ENCODE measurements at regions of chr6 and their contacts with region 1.

Region 1: DNA sequence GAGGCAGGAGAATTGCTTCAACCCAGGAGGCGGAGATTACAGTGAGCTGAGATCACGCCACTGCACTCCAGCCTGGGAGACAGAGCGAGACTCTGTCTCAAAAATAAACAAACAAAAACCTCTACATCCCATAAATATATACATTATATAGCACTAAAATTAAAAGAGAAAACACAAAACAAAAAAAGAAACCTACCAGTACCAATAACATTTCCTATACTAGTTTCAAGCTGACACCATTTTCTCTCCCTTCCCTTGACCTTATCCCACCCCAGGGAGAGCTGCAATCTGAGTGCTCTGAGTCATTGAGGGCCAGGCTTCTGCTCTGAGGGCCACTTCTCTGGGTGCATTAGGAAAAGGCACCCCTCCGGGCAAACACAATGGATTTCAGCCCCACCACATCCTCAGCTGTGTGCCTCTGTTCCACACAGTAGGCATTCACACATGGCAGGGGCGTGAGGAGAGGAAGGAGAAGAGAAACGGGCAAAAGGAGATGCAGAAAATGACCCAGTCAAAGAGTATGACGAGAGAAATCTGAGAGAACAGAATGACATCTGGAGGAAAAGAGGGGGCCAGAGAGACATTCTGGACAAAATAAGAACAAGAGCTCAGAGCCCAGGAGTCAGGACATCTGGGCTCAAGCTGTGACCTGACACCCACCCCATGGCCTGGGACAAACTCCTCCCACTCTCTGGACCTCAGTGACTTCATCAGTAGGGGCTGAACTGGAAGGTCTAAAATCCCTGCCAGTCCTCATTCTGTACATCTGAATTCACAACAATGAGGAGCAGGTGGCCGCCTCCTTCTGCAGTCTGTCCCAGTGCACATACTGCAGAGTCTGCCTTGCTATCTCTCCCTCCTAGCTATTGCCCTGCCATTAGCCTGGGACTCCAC is 18.2 kb downstream of the TRIM26 start:
- DNase-seq: no peak
- ATAC-seq: no peak
- H3K4me3 Mint-ChIP-seq: no peak overlapping the region
- H3K27ac Mint-ChIP-seq: peak overlapping the region; percentile 28
- H3K4me1 Mint-ChIP-seq: peaks cover 3% of the 10 kb centered on the region
- H3K27me3 Mint-ChIP-seq: no peaks in the 10 kb centered on the region
- CTCF ChIP-seq: no peak

Region 2: DNA sequence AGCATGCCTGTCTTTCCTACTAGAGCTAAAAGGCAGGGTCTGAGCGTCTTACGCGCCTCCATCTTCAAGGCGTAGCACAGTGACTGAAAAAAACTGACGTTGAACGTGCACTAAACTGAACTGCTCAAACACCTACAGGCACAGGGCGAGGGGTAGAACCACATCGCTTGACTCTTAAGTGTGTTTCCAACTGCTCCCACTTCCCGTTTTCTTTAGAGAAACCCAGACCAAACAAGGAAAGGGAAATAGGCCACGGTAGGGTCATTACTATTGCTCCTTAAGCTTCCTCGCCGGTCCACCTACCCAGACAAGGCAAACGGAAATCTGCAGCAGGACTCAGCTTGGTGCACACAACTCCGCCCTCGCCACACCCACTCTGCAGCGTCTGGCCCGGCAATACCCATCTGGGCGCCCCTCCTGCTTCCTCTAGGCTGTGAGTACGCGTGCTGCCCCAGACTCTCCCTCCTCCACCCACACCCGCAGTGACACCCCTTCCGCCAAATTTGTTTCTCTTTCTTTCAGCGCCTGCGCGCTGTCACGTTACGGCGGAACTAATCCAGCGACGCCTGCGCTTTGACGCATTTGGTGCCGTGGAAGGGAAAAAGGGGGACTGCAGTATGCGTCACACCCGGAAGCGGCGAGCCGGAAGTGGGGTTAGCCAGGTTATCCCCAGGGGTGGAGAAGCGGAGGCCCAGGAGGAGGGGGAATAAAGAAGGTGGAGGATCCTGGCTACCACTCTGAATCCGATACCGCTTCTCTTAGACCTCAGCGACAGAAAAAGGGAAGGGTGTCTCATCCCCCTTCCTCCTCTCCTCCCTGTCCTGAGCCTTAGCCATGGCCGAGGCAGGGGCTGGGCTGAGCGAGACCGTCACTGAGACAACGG is 128.2 kb before region 1 on chr6 and contains the start of gene PPP1R11:
- CTCF ChIA-PET with region 1: no interaction called
- POLR2A ChIA-PET with region 1: no interaction called
- intact Hi-C with region 1: no loop called
- DNase-seq: peak; percentile 99
- ATAC-seq: peak; percentile 98
- H3K4me3 Mint-ChIP-seq: peak within 1 kb of the TSS; percentile 87
- H3K27ac Mint-ChIP-seq: peak within 1 kb of the TSS; percentile 96
- H3K4me1 Mint-ChIP-seq: peaks cover 40% of the 10 kb centered on the region
- H3K27me3 Mint-ChIP-seq: peaks cover 7% of the 10 kb centered on the region
- CTCF ChIP-seq: no peak
- total RNA-seq, gene PPP1R11: 33.8 to 34.1 TPM

Region 3: GRCh38 chr6:30206799-30207618 is 12.0 kb after region 1 on chr6:
- CTCF ChIA-PET with region 1: interaction called, 3 read pairs
- POLR2A ChIA-PET with region 1: interaction called, 31 read pairs
- intact Hi-C with region 1: no loop called
- DNase-seq: no peak
- ATAC-seq: no peak
- H3K4me3 Mint-ChIP-seq: no peak overlapping the region
- H3K27ac Mint-ChIP-seq: no peak overlapping the region
- H3K4me1 Mint-ChIP-seq: peaks cover 66% of the 10 kb centered on the region
- H3K27me3 Mint-ChIP-seq: no peaks in the 10 kb centered on the region
- CTCF ChIP-seq: no peak

Measured in activated CD8-positive, alpha-beta T cell treated with anti-CD3 and anti-CD28 coated beads for 36 hours (primary cell).